ENCODE measurements at regions of chr9 and their contacts with region 1.

Region 1: GRCh38 chr9:94867281-94867841 is 140.9 kb downstream of the AOPEP start:
- DNase-seq: peak; percentile 77
- H3K4me3 ChIP-seq: peak overlapping the region in 1 of 3 experiments; percentile 0
- H3K27ac ChIP-seq: peak overlapping the region; percentile 88
- H3K4me1 ChIP-seq: peaks cover 45% of the 10 kb centered on the region
- H3K27me3 ChIP-seq: no peaks in the 10 kb centered on the region
- CTCF ChIP-seq: no peak

Region 2: GRCh38 chr9:94498801-94499453 is 368.4 kb before region 1 on chr9:
- CTCF ChIA-PET with region 1: no interaction called
- dilution Hi-C with region 1: no loop called
- in situ Hi-C with region 1: no loop called
- intact Hi-C with region 1: no loop called
- DNase-seq: no peak
- H3K4me3 ChIP-seq: no peak overlapping the region
- H3K27ac ChIP-seq: no peak overlapping the region
- H3K4me1 ChIP-seq: no peaks in the 10 kb centered on the region
- H3K27me3 ChIP-seq: peaks cover 2% of the 10 kb centered on the region
- CTCF ChIP-seq: no peak

Region 3: GRCh38 chr9:94819161-94819699 is 48.1 kb before region 1 on chr9:
- CTCF ChIA-PET with region 1: no interaction called
- dilution Hi-C with region 1: no loop called
- in situ Hi-C with region 1: no loop called
- intact Hi-C with region 1: loop called (anchors 5 kb)
- DNase-seq: no peak
- H3K4me3 ChIP-seq: no peak overlapping the region
- H3K27ac ChIP-seq: peak overlapping the region; percentile 12
- H3K4me1 ChIP-seq: peaks cover 22% of the 10 kb centered on the region
- H3K27me3 ChIP-seq: no peaks in the 10 kb centered on the region
- CTCF ChIP-seq: no peak

Region 4: DNA sequence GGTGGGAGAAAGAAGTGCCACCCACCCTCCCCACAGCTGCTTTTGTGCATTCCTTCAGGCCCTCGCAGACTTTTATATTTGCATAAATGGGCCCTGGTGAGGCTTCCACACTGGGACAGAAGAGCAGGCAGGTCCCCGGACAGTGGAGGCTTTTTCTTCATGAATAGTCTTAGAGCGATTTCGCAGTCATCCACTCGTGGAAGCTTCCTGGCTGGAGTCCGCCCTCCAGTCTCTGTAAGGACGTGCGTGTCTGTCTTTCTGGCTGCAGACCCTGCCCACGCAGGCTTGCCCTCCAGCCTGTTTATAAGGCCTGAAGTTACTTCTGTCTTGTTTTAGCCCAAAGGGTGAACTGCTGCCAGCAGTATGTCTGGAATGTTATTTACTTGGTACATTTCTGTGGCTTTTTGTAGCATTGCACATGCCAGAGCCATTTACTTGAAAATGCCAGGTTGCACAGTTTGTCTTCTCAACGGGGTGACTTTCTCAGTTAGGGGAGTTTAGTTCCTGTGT is 54.8 kb after region 1 on chr9:
- CTCF ChIA-PET with region 1: no interaction called
- dilution Hi-C with region 1: no loop called
- in situ Hi-C with region 1: no loop called
- intact Hi-C with region 1: loop called (anchors 1 kb)
- DNase-seq: peak; percentile 69
- H3K4me3 ChIP-seq: no peak overlapping the region
- H3K27ac ChIP-seq: peak overlapping the region; percentile 62
- H3K4me1 ChIP-seq: peaks cover 64% of the 10 kb centered on the region
- H3K27me3 ChIP-seq: no peaks in the 10 kb centered on the region
- CTCF ChIP-seq: no peak

Region 5: GRCh38 chr9:94952565-94953373 is 85.4 kb after region 1 on chr9:
- CTCF ChIA-PET with region 1: no interaction called
- dilution Hi-C with region 1: loop called (anchors 5 kb)
- in situ Hi-C with region 1: no loop called
- intact Hi-C with region 1: no loop called
- DNase-seq: peak; percentile 61
- H3K4me3 ChIP-seq: peak overlapping the region in 1 of 3 experiments; percentile 19
- H3K27ac ChIP-seq: peak overlapping the region; percentile 59
- H3K4me1 ChIP-seq: peaks cover 39% of the 10 kb centered on the region
- H3K27me3 ChIP-seq: no peaks in the 10 kb centered on the region
- CTCF ChIP-seq: no peak